Activated CD4-positive, alpha-beta memory T cell treated with anti-CD3 and anti-CD28 coated beads for 36 hours (primary cell): ENCODE measurements at regions of chr3 and their contacts with region 1.

Region 1: DNA sequence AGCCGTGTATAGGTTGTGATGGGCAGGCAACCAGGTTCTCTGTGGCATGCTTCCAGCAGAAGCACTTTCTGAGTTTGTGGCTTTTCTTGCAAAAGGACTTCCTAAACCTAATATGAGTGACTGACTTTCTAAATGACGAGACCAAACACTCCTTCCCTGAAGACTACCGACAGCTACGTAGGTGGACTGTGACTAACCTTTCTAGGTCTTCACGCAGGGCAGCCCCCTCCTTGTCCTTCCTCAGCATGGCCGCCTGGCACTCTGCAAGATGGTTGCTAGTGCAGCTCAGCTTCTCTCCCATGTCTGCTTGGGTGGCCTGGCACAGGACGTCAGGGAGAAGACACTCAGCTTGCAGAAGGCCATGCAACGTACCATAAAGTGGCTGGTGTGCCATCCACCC is 20.9 kb downstream of the CXCR6 start:
- DNase-seq: peak; percentile 84
- H3K4me3 Mint-ChIP-seq: no peak overlapping the region
- H3K27ac Mint-ChIP-seq: peak overlapping the region; percentile 77
- H3K4me1 Mint-ChIP-seq: peaks cover 72% of the 10 kb centered on the region
- H3K27me3 Mint-ChIP-seq: no peaks in the 10 kb centered on the region

Region 2: GRCh38 chr3:45950686-45951600 is 13.2 kb before region 1 on chr3:
- CTCF ChIA-PET with region 1: interaction called, 8 read pairs
- POLR2A ChIA-PET with region 1: interaction called, 30 read pairs
- intact Hi-C with region 1: loop called (anchors 1 kb)
- DNase-seq: peak; percentile 85
- H3K4me3 Mint-ChIP-seq: no peak overlapping the region
- H3K27ac Mint-ChIP-seq: peak overlapping the region; percentile 77
- H3K4me1 Mint-ChIP-seq: peaks cover 50% of the 10 kb centered on the region
- H3K27me3 Mint-ChIP-seq: peaks cover under 1% of the 10 kb centered on the region

Region 3: GRCh38 chr3:45978006-45978761 is 14.0 kb after region 1 on chr3:
- CTCF ChIA-PET with region 1: interaction called, 8 read pairs
- POLR2A ChIA-PET with region 1: interaction called, 17 read pairs
- intact Hi-C with region 1: loop called (anchors 1 kb)
- DNase-seq: peak; percentile 87
- H3K4me3 Mint-ChIP-seq: peak overlapping the region; percentile 39
- H3K27ac Mint-ChIP-seq: peak overlapping the region; percentile 87
- H3K4me1 Mint-ChIP-seq: peaks cover 84% of the 10 kb centered on the region
- H3K27me3 Mint-ChIP-seq: no peaks in the 10 kb centered on the region

Region 4: DNA sequence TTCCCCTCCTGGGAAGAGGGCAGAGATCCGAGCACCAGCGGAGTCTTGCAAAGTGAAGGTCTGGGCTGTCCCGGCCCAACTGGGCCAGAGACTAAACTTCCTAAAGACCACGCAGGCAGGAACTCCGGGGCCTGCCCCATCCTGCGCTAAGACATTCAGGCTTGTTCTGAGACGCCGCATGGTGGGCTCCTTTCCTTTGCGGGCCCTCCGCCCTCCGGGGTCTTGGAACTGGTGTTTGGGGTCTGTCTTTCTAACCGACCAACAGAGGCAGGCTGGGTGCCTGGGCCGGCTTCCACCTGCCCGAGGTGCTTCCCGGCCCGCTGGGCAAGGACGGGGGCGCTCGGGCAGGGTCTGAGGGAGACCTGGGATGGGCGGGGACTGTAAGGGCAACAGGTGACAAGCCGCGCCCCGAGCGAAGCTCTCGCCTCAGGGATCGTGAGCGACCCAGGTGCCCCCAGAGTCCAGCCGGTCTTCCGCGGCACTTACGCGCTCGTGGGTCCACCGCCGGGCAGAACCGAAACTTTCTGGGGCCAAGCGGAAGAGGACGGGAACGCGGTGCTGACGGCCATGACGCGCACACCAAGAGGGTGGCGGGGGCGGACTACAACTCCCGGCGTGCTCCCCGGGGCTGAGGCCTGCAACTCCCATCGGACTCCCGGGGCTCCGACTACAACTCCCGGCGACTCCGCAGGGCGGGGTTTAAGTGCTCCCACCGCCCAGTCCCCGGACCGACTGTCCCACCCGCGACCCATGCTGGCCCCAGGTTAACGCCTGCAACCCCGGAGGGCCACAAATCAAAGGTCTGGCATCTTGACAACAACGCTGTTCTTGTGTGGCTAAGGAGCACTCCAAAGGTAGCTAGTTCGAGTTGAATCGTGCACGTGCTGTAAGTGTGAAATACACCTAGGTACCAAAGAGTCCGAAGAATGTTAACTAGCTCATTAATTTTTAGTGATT is 31.4 kb after region 1 on chr3 and contains the start of gene FYCO1:
- CTCF ChIA-PET with region 1: interaction called, 8 read pairs
- POLR2A ChIA-PET with region 1: interaction called, 10 read pairs
- intact Hi-C with region 1: loop called (anchors 1 kb)
- DNase-seq: peak; percentile 93
- H3K4me3 Mint-ChIP-seq: peak within 1 kb of the TSS; percentile 85
- H3K27ac Mint-ChIP-seq: peak within 1 kb of the TSS; percentile 87
- H3K4me1 Mint-ChIP-seq: peaks cover 44% of the 10 kb centered on the region
- H3K27me3 Mint-ChIP-seq: no peaks in the 10 kb centered on the region
- total RNA-seq, gene FYCO1: 13.7 to 14.0 TPM

Region 5: GRCh38 chr3:46098319-46098761 is 134.2 kb after region 1 on chr3:
- CTCF ChIA-PET with region 1: interaction called, 4 read pairs
- POLR2A ChIA-PET with region 1: interaction called, 4 read pairs
- intact Hi-C with region 1: loop called (anchors 1 kb)
- DNase-seq: peak; percentile 76
- H3K4me3 Mint-ChIP-seq: peak overlapping the region; percentile 36
- H3K27ac Mint-ChIP-seq: peak overlapping the region; percentile 85
- H3K4me1 Mint-ChIP-seq: peaks cover 42% of the 10 kb centered on the region
- H3K27me3 Mint-ChIP-seq: peaks cover 30% of the 10 kb centered on the region

Region 6: GRCh38 chr3:47117807-47118364 is 1153.7 kb after region 1 on chr3:
- CTCF ChIA-PET with region 1: no interaction called
- POLR2A ChIA-PET with region 1: no interaction called
- intact Hi-C with region 1: no loop called
- DNase-seq: no peak
- H3K4me3 Mint-ChIP-seq: no peak overlapping the region
- H3K27ac Mint-ChIP-seq: peak overlapping the region; percentile 55
- H3K4me1 Mint-ChIP-seq: peaks cover 42% of the 10 kb centered on the region
- H3K27me3 Mint-ChIP-seq: no peaks in the 10 kb centered on the region